ENCODE measurements at regions of chr21 and their contacts with region 1.

Region 1: DNA sequence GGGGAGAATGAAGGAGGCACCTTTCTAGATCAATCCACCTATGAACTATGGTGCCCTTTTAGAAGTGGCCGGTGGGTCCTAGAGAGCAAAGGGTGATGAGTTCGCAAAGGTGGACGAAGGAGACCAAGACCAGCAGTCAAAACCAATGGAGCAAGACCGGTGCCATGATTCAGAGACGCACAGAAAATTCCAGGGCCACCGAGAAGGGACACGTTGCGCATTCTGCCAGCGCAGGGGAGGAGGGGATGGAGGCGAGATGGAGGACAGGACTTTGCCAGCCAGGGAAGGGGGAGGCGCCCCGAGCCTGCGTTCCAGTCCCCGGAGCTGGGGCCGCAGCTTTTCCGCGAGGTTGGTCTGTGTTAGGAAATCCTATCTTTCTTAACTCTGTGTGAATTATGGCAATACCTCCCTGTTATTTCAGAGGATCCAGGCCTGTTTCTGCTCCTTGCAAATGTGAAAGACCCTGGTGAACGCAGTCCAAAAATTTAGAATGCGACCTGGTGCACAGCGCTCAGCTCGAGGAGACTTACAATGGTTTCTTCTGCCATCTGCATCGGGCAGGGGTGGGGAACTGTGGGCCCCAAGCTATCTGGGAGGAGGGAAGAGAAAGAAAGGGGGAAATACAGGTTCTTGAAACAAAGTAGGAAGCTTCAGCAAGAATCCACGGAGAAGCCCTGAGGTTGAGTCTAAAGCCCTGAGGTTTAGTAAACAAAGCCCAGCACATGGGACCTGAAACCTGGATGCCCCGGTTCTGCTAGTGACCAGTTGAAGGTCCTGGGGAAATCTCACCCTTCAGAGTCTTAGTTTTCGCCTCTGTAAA is 129.4 kb downstream of the MRPS6 start:
- DNase-seq: no peak
- H3K4me3 Mint-ChIP-seq: peak overlapping the region; percentile 45
- H3K27ac Mint-ChIP-seq: no peak overlapping the region
- H3K4me1 Mint-ChIP-seq: peaks cover 46% of the 10 kb centered on the region
- H3K27me3 Mint-ChIP-seq: peaks cover 9% of the 10 kb centered on the region

Region 2: GRCh38 chr21:34190576-34191321 is 12.0 kb before region 1 on chr21:
- CTCF ChIA-PET with region 1: interaction called, 11 read pairs
- DNase-seq: no peak
- H3K4me3 Mint-ChIP-seq: no peak overlapping the region
- H3K27ac Mint-ChIP-seq: no peak overlapping the region
- H3K4me1 Mint-ChIP-seq: peaks cover 11% of the 10 kb centered on the region
- H3K27me3 Mint-ChIP-seq: no peaks in the 10 kb centered on the region